ENCODE measurements at regions of chr7 and their contacts with region 1.

Region 1: GRCh38 chr7:112069879-112070321 is 136.3 kb downstream of the DOCK4 start:
- DNase-seq: peak; percentile 72
- H3K4me3 ChIP-seq: no peak overlapping the region
- H3K27ac ChIP-seq: no peak overlapping the region
- H3K4me1 ChIP-seq: peaks cover 39% of the 10 kb centered on the region
- H3K27me3 ChIP-seq: no peaks in the 10 kb centered on the region
- CTCF ChIP-seq: no peak
- POLR2A ChIP-seq: no peak

Region 2: GRCh38 chr7:111771638-111772037 is 298.3 kb before region 1 on chr7:
- CTCF ChIA-PET with region 1: no interaction called
- POLR2A ChIA-PET with region 1: no interaction called
- dilution Hi-C with region 1: no loop called
- intact Hi-C with region 1: no loop called
- DNase-seq: no peak
- H3K4me3 ChIP-seq: no peak overlapping the region
- H3K27ac ChIP-seq: no peak overlapping the region
- H3K4me1 ChIP-seq: no peaks in the 10 kb centered on the region
- H3K27me3 ChIP-seq: no peaks in the 10 kb centered on the region
- CTCF ChIP-seq: no peak
- POLR2A ChIP-seq: no peak

Region 3: DNA sequence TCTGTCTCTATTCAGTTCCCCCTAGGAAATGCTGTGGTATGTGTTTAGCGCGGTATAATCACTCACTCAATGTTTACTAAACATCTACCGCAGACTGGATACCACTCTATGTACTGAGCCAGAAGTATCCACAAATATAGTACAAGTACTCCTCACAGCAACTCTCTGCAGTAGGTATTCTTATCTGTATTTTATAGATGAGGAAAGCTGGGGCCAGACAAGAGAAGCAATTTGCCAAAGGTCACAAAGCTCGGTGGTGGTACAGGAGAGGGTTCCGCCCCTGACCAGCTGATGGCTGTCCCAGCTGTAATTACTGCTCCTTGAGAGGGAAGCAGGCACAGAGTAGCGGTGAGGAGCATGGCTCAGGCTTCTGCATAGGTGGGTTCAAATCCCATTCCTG is 47.8 kb before region 1 on chr7:
- CTCF ChIA-PET with region 1: no interaction called
- POLR2A ChIA-PET with region 1: interaction called, 15 read pairs
- dilution Hi-C with region 1: no loop called
- intact Hi-C with region 1: no loop called
- DNase-seq: no peak
- H3K4me3 ChIP-seq: no peak overlapping the region
- H3K27ac ChIP-seq: peak overlapping the region; percentile 97
- H3K4me1 ChIP-seq: peaks cover 43% of the 10 kb centered on the region
- H3K27me3 ChIP-seq: no peaks in the 10 kb centered on the region
- CTCF ChIP-seq: no peak
- POLR2A ChIP-seq: no peak

Measured in endothelial cell of umbilical vein (primary cell).